Activated CD4-positive, alpha-beta memory T cell treated with anti-CD3 and anti-CD28 coated beads, Interleukin-2, amount 10 ng/mL, durations not matched to agents 7 days and 5 days (primary cell): ENCODE measurements at regions of chr19 and their contacts with region 1.

Region 1: GRCh38 chr19:36665832-36666231 is 805 bp downstream of the ZNF461 start:
- DNase-seq: no peak
- H3K4me3 Mint-ChIP-seq: peak overlapping the region; percentile 94
- H3K27ac Mint-ChIP-seq: peak overlapping the region; percentile 94
- H3K4me1 Mint-ChIP-seq: peaks cover 25% of the 10 kb centered on the region
- H3K27me3 Mint-ChIP-seq: no peaks in the 10 kb centered on the region

Region 2: GRCh38 chr19:36401475-36401874 is 264.4 kb before region 1 on chr19:
- CTCF ChIA-PET with region 1: no interaction called
- POLR2A ChIA-PET with region 1: no interaction called
- DNase-seq: no peak
- H3K4me3 Mint-ChIP-seq: no peak overlapping the region
- H3K27ac Mint-ChIP-seq: no peak overlapping the region
- H3K4me1 Mint-ChIP-seq: no peaks in the 10 kb centered on the region
- H3K27me3 Mint-ChIP-seq: no peaks in the 10 kb centered on the region

Region 3: DNA sequence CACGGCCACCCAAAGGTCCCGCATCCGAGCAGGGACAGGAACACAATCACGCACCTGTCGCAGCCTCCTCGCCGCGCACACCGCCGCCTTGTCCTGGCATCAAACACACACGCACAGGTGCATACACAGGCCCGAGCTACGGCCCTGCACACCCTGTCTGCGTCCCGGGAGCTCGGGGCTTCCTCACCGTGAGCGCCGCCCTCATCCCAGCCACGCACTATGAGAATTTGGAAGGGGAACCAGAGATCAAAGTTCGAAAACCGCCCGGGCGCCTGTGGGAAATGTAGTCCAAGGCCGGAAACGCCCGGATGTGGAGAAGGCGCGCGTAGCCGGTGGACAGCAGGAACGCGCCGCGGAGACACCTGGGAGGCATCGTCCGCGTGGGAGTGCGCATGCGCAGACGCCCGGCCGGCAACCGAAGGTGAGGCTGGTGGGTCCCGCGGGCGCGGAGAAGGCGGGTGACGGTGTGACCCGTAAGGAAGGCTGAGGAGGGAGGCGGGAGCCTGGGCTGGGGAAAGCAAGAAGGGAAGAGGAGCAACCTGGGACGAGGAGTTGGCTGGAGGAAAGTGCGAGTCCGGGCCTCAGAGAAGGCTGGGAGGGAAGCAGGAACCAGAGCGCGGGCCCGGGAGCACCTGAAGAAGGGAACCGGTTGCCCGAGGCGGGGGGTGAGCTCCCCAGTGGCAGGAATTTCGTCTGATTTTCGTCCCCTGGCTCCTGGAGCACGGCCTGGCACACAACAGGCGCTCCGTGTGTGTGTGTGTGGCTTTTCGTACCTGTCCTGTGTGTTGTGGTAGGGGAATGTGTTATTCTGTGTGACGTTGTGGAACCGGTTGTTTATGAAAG is 21.6 kb after region 1 on chr19 and contains the start of gene ZNF567:
- CTCF ChIA-PET with region 1: no interaction called
- POLR2A ChIA-PET with region 1: interaction called, 12 read pairs
- DNase-seq: peak; percentile 98
- H3K4me3 Mint-ChIP-seq: peak within 1 kb of the TSS; percentile 97
- H3K27ac Mint-ChIP-seq: peak within 1 kb of the TSS; percentile 87
- H3K4me1 Mint-ChIP-seq: peaks cover 34% of the 10 kb centered on the region
- H3K27me3 Mint-ChIP-seq: no peaks in the 10 kb centered on the region
- total RNA-seq, gene ZNF567: 9.8 to 11.2 TPM

Region 4: DNA sequence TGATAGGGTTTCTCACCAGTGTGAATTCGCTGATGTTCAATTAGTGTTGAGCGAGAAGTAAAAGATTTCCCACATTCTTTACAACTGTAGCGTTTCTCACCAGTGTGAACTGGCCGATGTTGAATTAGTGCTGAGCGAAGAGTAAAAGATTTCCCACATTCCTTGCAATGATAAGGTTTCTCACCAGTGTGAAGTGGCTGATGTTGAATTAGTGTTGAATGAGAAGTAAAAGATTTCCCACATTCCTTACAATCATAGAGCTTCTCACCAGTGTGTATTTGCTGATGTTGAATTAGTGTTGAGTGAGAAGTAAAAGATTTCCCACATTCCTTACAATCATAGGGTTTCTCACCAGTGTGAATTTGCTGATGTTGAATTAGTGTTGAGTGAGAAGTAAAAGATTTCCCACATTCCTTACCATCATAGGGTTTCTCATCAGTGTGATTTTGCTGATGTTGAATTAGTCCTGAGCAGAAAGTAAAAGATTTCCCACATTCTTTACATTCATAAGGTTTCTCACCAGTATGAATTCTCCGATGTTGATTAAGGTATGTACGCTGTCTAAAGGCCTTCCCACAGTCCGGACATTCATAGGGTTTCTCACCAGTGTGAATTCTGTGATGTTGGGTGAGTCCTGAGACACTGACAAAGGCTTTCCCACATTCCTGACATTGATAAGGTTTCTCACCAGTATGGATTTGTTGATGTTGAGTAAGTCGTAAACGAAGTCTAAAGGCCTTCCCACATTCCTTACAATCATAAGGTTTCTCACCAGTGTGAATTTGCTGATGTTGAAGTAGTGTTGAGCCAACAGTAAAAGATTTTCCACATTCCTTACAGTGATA is 82.8 kb after region 1 on chr19:
- CTCF ChIA-PET with region 1: no interaction called
- POLR2A ChIA-PET with region 1: no interaction called
- DNase-seq: no peak
- H3K4me3 Mint-ChIP-seq: no peak overlapping the region
- H3K27ac Mint-ChIP-seq: no peak overlapping the region
- H3K4me1 Mint-ChIP-seq: no peaks in the 10 kb centered on the region
- H3K27me3 Mint-ChIP-seq: no peaks in the 10 kb centered on the region